Activated CD4-positive, alpha-beta T cell treated with anti-CD3 and anti-CD28 coated beads for 36 hours (primary cell): ENCODE measurements at regions of chr16 and their contacts with region 1.

Region 1: DNA sequence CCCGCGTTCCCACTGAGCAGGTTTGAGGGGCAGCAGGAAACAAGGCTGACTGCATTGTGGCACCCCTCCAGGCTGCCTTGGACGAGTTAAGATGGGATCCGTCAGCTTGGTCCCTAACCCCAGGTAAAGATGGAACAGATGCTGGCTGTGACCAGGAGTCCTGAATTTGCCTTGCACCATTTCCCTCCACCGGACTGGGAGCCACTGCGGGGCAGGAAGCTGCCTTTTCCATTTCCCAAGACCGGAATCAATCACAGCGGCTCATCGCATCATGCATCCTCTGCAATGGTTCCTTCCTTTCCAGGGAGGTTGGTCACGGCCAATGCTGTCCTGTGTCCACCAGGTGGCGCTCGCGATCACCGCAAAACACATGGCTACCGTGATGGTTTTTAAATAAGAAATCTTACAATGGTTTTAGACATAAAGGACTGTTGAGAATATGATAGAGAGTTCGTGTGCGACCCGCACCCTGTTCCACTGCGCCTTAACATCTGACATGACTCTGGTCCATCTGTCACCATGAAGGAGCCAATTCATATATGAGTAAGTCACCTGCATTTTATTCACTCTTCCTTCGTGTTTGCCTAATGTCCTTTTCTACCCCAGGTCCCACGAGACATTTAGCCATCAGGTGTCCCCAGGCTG is 6.8 kb upstream of the MEAK7 start:
- DNase-seq: peak; percentile 94
- ATAC-seq: peak; percentile 23
- H3K4me3 Mint-ChIP-seq: no peak overlapping the region
- H3K27ac Mint-ChIP-seq: peak overlapping the region; percentile 26
- H3K4me1 Mint-ChIP-seq: peaks cover 69% of the 10 kb centered on the region
- H3K27me3 Mint-ChIP-seq: no peaks in the 10 kb centered on the region

Region 2: GRCh38 chr16:84548971-84549844 is 37.9 kb after region 1 on chr16:
- CTCF ChIA-PET with region 1: interaction called, 4 read pairs
- POLR2A ChIA-PET with region 1: no interaction called
- intact Hi-C with region 1: loop called in 1 of 2 experiments (anchors 2 kb)
- DNase-seq: peak; percentile 44
- ATAC-seq: peak; percentile 64
- H3K4me3 Mint-ChIP-seq: peak overlapping the region; percentile 58
- H3K27ac Mint-ChIP-seq: peak overlapping the region; percentile 85
- H3K4me1 Mint-ChIP-seq: peaks cover 26% of the 10 kb centered on the region
- H3K27me3 Mint-ChIP-seq: peaks cover 1% of the 10 kb centered on the region

Region 3: GRCh38 chr16:84599521-84600202 is 88.4 kb after region 1 on chr16:
- CTCF ChIA-PET with region 1: interaction called, 18 read pairs
- POLR2A ChIA-PET with region 1: interaction called, 7 read pairs
- intact Hi-C with region 1: loop called (anchors 1 to 2 kb)
- DNase-seq: peak; percentile 90
- ATAC-seq: peak; percentile 58
- H3K4me3 Mint-ChIP-seq: peak overlapping the region; percentile 74
- H3K27ac Mint-ChIP-seq: peak overlapping the region; percentile 97
- H3K4me1 Mint-ChIP-seq: peaks cover 94% of the 10 kb centered on the region
- H3K27me3 Mint-ChIP-seq: no peaks in the 10 kb centered on the region

Region 4: GRCh38 chr16:84952335-84953189 is 441.3 kb after region 1 on chr16:
- CTCF ChIA-PET with region 1: no interaction called
- POLR2A ChIA-PET with region 1: no interaction called
- intact Hi-C with region 1: loop called in 1 of 2 experiments (anchors 10 kb)
- DNase-seq: peak; percentile 79
- ATAC-seq: peak; percentile 91
- H3K4me3 Mint-ChIP-seq: no peak overlapping the region
- H3K27ac Mint-ChIP-seq: no peak overlapping the region
- H3K4me1 Mint-ChIP-seq: no peaks in the 10 kb centered on the region
- H3K27me3 Mint-ChIP-seq: no peaks in the 10 kb centered on the region